Vagina (tissue), 2 donors: ENCODE measurements at regions of chr1 and their contacts with region 1.

Region 1: DNA sequence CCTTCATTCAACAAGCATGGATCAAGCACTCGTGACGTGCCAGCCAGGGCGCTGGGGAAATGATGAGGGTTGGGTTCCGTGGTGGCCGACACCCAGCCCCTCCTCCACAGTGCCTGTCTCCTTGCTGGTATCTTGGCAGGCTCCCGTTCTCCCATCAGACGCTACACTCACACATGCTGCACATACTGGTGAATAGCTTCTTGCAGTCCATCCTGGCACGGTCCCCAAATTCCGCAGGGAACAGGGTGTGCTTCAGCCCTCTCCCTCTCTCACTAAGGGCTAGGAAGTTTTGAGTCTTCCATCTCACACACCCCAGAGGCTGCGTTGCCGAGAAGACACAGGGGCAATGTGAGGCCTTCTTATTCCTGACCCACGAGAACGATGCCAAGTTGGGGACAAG is 10.1 kb upstream of the MEF2D start:
- DNase-seq: no peak
- H3K4me3 ChIP-seq: no peak overlapping the region
- H3K27ac ChIP-seq: peak overlapping the region; percentile 92
- H3K4me1 ChIP-seq: peaks cover 40% of the 10 kb centered on the region
- H3K27me3 ChIP-seq: no peaks in the 10 kb centered on the region
- CTCF ChIP-seq: no peak
- POLR2A ChIP-seq: no peak

Region 2: GRCh38 chr1:156165083-156165482 is 345.6 kb before region 1 on chr1:
- intact Hi-C with region 1: no loop called
- DNase-seq: no peak
- H3K4me3 ChIP-seq: no peak overlapping the region
- H3K27ac ChIP-seq: no peak overlapping the region
- H3K4me1 ChIP-seq: peaks cover 17% of the 10 kb centered on the region
- H3K27me3 ChIP-seq: no peaks in the 10 kb centered on the region
- CTCF ChIP-seq: no peak
- POLR2A ChIP-seq: no peak

Region 3: GRCh38 chr1:156583821-156584622 is 73.3 kb after region 1 on chr1:
- intact Hi-C with region 1: loop called (anchors 10 kb)
- DNase-seq: no peak
- H3K4me3 ChIP-seq: no peak overlapping the region
- H3K27ac ChIP-seq: no peak overlapping the region
- H3K4me1 ChIP-seq: no peaks in the 10 kb centered on the region
- H3K27me3 ChIP-seq: no peaks in the 10 kb centered on the region
- CTCF ChIP-seq: peak; percentile 84 to 92 (median 90)
- POLR2A ChIP-seq: no peak